Common myeloid progenitor, CD34-positive (primary cell): ENCODE measurements at regions of chr17 and their contacts with region 1.

Region 1: DNA sequence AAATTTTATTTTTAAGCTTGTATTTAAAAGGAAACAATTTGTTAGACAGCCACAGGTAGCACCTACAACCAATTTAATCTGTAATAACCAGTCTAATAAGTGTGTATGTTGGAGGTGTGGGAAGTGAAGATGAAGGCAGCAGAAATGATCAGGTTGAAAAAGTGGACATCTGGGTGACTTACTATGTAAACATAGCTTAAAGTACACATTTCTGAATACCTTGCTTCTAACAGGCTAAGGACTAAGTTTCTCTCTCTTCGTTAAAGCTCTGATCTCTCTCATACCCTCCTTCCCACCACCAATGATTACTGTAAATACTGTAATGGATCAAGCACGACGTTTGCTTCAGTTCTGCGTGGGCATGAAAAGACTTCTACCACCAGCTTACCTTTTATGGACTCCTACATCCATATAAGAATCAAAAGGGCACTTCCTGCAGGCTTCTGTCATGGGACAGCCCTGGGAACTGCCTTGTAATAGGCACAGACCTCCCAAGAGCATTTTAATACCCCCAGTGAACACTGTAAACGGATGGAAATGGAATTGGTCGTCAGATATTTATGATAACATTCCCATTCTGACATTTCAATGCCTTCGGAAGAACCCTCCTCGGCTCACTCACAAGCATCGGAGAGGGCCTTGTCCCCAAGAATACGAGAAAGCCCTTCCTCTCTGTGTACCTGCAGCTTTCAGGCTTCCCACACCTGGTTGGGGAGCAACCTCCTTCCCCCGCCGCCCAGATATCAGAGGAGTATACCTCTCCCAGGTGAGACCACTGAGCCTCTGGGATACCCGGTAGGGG is 700 bp downstream of the CCDC43 start:
- DNase-seq: peak in 1 of 3 donors; percentile 1
- H3K4me3 ChIP-seq: peak overlapping the region; percentile 84 to 100 (median 97)
- H3K27ac ChIP-seq: peak overlapping the region; percentile 84 to 94
- H3K4me1 ChIP-seq: peaks cover 10 to 21% (median 16%) of the 10 kb centered on the region in 4 experiments
- H3K27me3 ChIP-seq: no peaks in the 10 kb centered on the region

Region 2: DNA sequence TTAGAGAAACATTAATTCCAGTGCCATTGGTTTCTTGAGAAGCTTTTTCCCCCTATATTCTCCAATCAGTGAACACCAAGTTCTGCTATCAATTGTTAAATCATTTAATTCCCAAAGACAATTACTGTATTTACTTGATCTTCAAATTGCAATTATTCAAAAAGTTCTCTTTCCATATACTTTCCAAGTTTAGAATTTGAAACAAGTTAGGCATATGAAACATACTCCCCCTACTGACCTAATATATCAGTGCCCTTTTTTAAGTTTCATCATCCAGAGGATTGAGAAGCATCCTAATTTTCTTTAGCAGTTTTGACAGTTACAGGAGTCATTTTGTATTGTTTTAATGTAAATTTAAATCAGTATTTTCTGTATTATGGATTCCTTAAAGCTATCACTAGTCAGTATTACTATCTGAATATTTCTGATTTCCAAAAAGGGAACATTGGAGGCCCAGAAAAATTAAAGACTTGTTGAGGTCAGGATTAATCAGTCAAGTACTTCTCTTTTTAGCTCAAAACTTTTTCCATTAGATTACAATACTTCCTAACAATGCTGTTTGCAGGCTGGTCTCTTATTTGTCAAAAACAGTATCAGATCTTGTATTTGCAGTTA is 16.3 kb before region 1 on chr17:
- CTCF ChIA-PET with region 1: interaction called, 15 read pairs
- POLR2A ChIA-PET with region 1: interaction called, 3 read pairs
- DNase-seq: peak in 2 of 3 donors; percentile 38 to 51
- H3K4me3 ChIP-seq: no peak overlapping the region
- H3K27ac ChIP-seq: no peak overlapping the region
- H3K4me1 ChIP-seq: no peaks in the 10 kb centered on the region
- H3K27me3 ChIP-seq: peaks cover 0 to 2% (median 0%) of the 10 kb centered on the region in 5 experiments

Region 3: GRCh38 chr17:44733753-44734152 is 44.9 kb after region 1 on chr17:
- CTCF ChIA-PET with region 1: no interaction called
- POLR2A ChIA-PET with region 1: no interaction called
- DNase-seq: peak; percentile 22 to 50 (median 39)
- H3K4me3 ChIP-seq: no peak overlapping the region
- H3K27ac ChIP-seq: no peak overlapping the region
- H3K4me1 ChIP-seq: no peaks in the 10 kb centered on the region
- H3K27me3 ChIP-seq: no peaks in the 10 kb centered on the region

Region 4: DNA sequence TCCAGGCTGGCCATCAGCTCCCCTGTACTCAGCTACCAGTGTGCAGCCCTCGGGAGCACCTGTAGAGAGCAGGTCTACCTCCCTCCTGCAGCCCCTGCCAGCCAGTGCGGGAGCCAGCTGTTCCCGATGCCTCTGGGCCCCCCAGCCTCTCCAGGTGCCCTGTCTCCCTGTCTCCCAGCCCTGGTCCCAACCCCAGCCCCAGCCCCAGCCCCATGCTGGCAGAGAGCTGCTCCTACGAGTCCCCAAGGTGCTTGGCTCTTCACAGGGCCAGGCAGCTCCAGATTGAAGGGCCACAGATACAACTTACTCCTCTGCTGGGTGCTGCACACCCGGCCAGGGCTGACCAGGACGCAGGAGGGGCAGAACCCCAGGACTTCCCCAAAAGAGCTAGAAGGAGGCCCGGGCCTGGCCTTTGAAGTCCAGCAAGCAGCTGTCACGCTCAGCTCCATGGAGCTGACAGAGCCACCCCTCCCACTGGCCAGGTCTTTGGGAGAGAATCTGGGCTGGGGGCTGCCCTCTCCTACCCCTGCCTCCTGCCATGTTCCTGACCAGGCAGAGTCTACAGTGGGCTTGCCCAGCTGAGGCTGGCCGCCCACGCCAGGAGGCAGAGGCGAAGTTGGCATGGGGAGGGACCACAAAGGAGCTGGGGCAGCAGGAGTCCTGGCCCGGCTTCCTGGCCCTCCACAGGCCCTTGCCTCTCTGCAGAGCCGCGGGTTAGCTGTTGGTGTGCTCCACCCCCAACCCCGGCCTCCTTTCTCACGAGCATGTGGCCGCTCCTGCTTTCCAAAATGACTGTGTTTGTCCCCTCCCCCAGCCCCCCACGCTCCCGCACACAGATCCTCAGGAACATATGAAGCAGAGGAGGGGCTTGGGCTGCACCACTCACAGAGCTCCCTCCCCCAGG is 60.5 kb after region 1 on chr17:
- CTCF ChIA-PET with region 1: no interaction called
- POLR2A ChIA-PET with region 1: no interaction called
- DNase-seq: no peak
- H3K4me3 ChIP-seq: no peak overlapping the region
- H3K27ac ChIP-seq: no peak overlapping the region
- H3K4me1 ChIP-seq: no peaks in the 10 kb centered on the region
- H3K27me3 ChIP-seq: no peaks in the 10 kb centered on the region